Calu3 (cell line): ENCODE measurements at regions of chr3 and their contacts with region 1.

Region 1: DNA sequence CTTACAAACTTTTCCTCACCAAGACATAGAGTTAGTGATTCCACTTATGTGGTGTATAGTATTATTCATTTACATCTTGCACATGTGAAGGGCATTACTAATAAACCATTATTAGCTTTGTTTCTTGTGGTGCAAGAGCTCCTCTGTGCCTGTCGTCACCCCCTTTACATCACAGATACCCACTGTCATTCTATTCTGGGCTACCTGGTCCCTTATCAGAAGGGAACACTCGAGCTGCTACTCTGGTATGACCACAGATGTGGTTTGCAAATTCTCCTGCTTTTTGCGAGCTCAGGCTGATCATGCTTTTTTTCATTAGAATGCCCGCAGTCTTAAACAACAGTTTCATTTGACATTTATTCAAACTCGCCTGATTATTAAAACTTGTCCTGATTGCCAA is 13.9 kb upstream of the SENP2 start:
- DNase-seq: no peak
- H3K4me3 Mint-ChIP-seq: no peak overlapping the region
- H3K27ac Mint-ChIP-seq: no peak overlapping the region
- H3K4me1 Mint-ChIP-seq: peaks cover 17% of the 10 kb centered on the region
- H3K27me3 Mint-ChIP-seq: no peaks in the 10 kb centered on the region
- CTCF ChIP-seq: no peak

Region 2: DNA sequence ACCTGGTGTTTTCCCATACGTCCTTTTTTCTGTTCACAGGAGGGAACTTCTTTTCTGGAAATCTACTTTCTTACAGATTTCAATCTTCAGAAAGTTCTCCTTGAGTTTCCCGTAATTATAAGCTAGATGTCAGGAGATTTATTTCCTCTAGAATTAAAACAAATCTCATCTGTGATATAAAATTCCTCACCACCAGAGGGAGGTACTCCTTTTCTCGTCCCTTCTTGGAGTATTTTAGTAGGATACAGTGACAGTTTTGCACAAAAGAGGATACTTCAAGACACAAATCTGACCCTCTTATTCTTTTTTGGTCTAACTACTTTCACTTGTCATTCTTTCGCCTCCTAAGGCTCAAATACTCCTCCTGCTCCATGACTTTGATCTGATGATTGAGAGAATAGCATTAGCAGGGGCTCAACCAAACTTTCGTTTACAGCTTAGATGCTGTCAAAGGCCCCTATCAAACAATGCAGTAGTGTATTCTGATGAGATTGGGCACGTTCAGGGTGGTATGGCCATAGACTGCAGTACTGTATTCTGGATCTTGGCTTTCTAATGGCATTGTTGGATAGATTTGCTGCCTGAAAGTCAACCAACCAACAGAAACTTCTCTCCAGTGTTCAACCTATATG is 111.3 kb before region 1 on chr3:
- CTCF ChIA-PET with region 1: interaction called, 10 read pairs
- intact Hi-C with region 1: no loop called
- DNase-seq: no peak
- H3K4me3 Mint-ChIP-seq: no peak overlapping the region
- H3K27ac Mint-ChIP-seq: no peak overlapping the region
- H3K4me1 Mint-ChIP-seq: no peaks in the 10 kb centered on the region
- H3K27me3 Mint-ChIP-seq: no peaks in the 10 kb centered on the region
- CTCF ChIP-seq: no peak

Region 3: GRCh38 chr3:185486394-185486793 is 85.8 kb before region 1 on chr3:
- CTCF ChIA-PET with region 1: interaction called, 10 read pairs
- intact Hi-C with region 1: no loop called
- DNase-seq: no peak
- H3K4me3 Mint-ChIP-seq: no peak overlapping the region
- H3K27ac Mint-ChIP-seq: no peak overlapping the region
- H3K4me1 Mint-ChIP-seq: no peaks in the 10 kb centered on the region
- H3K27me3 Mint-ChIP-seq: no peaks in the 10 kb centered on the region
- CTCF ChIP-seq: no peak

Region 4: GRCh38 chr3:185585859-185586685 is 13.9 kb after region 1 on chr3 and contains the start of gene SENP2:
- CTCF ChIA-PET with region 1: interaction called, 12 read pairs
- intact Hi-C with region 1: no loop called
- DNase-seq: peak; percentile 100
- H3K4me3 Mint-ChIP-seq: peak within 1 kb of the TSS; percentile 79
- H3K27ac Mint-ChIP-seq: peak within 1 kb of the TSS; percentile 89
- H3K4me1 Mint-ChIP-seq: peaks cover 26% of the 10 kb centered on the region
- H3K27me3 Mint-ChIP-seq: no peaks in the 10 kb centered on the region
- CTCF ChIP-seq: no peak
- total RNA-seq, gene SENP2: 75.1 and 87.1 TPM in 2 replicates